ENCODE measurements at regions of chr15 and their contacts with region 1.

Region 1: GRCh38 chr15:71443538-71443937 is 328.3 kb downstream of the THSD4 start:
- DNase-seq: peak; percentile 51
- ATAC-seq: peak; percentile 53
- H3K4me3 ChIP-seq: no peak overlapping the region
- H3K27ac ChIP-seq: no peak overlapping the region
- H3K4me1 ChIP-seq: peaks cover 17% of the 10 kb centered on the region
- H3K27me3 ChIP-seq: no peaks in the 10 kb centered on the region
- CTCF ChIP-seq: peak; percentile 75
- POLR2A ChIP-seq: no peak
- RAD21 ChIP-seq: peak; percentile 60

Region 2: DNA sequence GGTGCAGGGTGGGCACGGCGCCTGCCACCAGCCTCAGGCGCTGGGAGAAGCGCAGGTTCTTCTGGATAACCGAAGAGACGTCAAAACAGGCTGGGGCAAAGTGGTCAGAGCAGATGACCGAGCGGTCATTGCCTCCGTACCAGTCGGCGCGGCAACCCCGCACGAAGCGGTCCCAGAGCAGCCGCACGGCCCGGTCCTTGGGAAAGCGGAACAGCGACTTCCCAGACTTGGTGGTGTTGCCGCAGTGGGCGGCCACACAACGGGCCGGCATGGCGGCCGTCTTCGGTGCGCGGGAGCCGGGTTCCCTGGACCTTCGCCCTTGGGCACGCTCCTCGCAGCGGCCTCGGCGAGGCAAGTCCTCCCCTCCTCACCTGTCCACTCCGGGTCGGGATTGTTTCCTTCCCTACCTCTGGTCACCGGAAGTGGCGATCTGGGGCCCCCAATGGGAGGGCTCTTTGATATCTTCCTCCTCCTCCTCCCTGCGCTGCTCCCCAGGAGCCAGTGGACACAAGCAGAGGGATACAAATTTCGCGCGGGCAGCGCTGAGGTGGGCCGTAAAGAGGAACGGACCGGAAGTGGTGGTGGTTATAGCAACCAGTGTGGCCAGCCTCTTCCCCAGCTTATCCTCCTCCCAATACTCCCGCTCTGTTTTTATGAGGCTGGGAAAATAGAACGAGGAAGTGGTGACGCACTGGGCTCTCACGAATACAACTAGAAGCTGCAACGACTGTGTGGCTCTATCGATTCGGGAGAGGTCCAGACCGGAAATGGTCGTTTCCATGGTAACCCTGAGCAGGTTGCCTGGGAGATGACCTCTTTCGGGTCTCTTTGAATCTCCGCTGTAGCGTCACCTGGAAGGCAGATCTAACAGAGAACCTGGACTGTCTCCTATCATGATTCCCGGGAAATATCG is 551.3 kb before region 1 on chr15 and contains the starts of genes LRRC49 and THAP10:
- CTCF ChIA-PET with region 1: no interaction called
- POLR2A ChIA-PET with region 1: no interaction called
- dilution Hi-C with region 1: no loop called
- in situ Hi-C with region 1: no loop called
- intact Hi-C with region 1: loop called (anchors 1 kb)
- DNase-seq: peak; percentile 98
- ATAC-seq: peak; percentile 95
- H3K4me3 ChIP-seq: peak within 1 kb of the TSS; percentile 66
- H3K27ac ChIP-seq: peak within 1 kb of the TSS; percentile 64
- H3K4me1 ChIP-seq: peaks cover 6% of the 10 kb centered on the region; the same call in 1 of the 2 replicates
- H3K27me3 ChIP-seq: no peaks in the 10 kb centered on the region
- CTCF ChIP-seq: no peak
- POLR2A ChIP-seq: peak; percentile 52; the same call in 1 of the 2 replicates
- RAD21 ChIP-seq: no peak; the same call in 1 of the 2 replicates
- total RNA-seq, gene LRRC49: 16.8 and 19.2 TPM in 2 replicates
- total RNA-seq, gene THAP10: 2.3 and 3.6 TPM in 2 replicates

Region 3: GRCh38 chr15:71011503-71012155 is 431.9 kb before region 1 on chr15:
- CTCF ChIA-PET with region 1: interaction called, 3 read pairs
- POLR2A ChIA-PET with region 1: no interaction called
- dilution Hi-C with region 1: no loop called
- in situ Hi-C with region 1: no loop called
- intact Hi-C with region 1: loop called (anchors 1 kb)
- DNase-seq: peak; percentile 84
- ATAC-seq: peak; percentile 100
- H3K4me3 ChIP-seq: no peak overlapping the region
- H3K27ac ChIP-seq: peak overlapping the region; percentile 42; the same call in 1 of the 2 replicates
- H3K4me1 ChIP-seq: no peaks in the 10 kb centered on the region
- H3K27me3 ChIP-seq: no peaks in the 10 kb centered on the region
- CTCF ChIP-seq: peak; percentile 94
- POLR2A ChIP-seq: 0 out of 2 replicates have a peak, but pooled peaks have one; percentile 25
- RAD21 ChIP-seq: peak; percentile 95

Region 4: GRCh38 chr15:71114896-71115554 is 328.5 kb before region 1 on chr15 and contains the start of gene THSD4:
- CTCF ChIA-PET with region 1: no interaction called
- POLR2A ChIA-PET with region 1: no interaction called
- dilution Hi-C with region 1: no loop called
- in situ Hi-C with region 1: loop called (anchors 5 kb)
- intact Hi-C with region 1: loop called (anchors 1 kb)
- DNase-seq: peak; percentile 72
- ATAC-seq: peak; percentile 85
- H3K4me3 ChIP-seq: peak within 1 kb of the TSS; percentile 96
- H3K27ac ChIP-seq: peak within 1 kb of the TSS; percentile 92
- H3K4me1 ChIP-seq: peaks cover 19% of the 10 kb centered on the region
- H3K27me3 ChIP-seq: no peaks in the 10 kb centered on the region
- CTCF ChIP-seq: peak; percentile 85
- POLR2A ChIP-seq: no peak
- RAD21 ChIP-seq: peak; percentile 76
- total RNA-seq, gene THSD4: 25.5 and 31.1 TPM in 2 replicates

Region 5: DNA sequence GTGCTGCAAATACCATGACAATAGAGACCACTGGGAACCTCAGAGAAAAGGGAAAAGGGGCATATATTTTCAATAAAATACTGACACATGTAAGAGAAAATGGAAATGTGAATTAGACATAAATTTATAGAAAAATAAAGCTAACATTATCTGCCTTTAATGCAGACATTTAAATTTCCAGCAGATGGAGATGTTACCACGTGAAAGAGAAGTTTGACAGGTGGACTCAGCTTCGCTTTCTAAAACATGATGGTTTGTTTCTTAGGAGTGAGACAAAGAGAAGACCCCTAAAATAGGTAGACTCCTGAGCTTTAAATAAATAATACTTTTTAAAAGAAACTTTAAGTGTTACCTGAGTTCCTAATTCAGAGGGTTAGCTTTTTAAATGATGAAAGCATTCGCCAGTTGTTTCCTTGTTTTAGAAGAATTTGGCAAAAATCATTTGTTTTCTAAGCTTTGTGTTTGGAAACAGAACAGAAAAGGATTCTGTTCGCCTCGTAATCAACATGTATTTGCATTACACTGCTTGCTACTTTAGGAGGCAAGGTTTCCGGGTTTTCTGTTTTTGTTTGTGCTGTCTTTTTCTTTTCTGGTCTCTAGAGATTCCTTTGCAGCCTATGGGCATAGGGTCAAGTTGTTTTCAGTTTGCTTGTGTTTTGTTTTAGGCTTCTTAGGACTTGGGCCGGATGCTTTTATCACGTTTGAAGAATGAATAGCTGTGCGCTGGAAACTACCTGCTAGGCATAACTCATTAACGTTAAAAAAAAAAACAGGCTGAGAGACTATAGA is 56.9 kb before region 1 on chr15:
- CTCF ChIA-PET with region 1: interaction called, 5 read pairs
- POLR2A ChIA-PET with region 1: no interaction called
- dilution Hi-C with region 1: no loop called
- in situ Hi-C with region 1: no loop called
- intact Hi-C with region 1: loop called (anchors 1 kb)
- DNase-seq: peak; percentile 38
- ATAC-seq: no peak
- H3K4me3 ChIP-seq: no peak overlapping the region
- H3K27ac ChIP-seq: no peak overlapping the region
- H3K4me1 ChIP-seq: peaks cover 16% of the 10 kb centered on the region
- H3K27me3 ChIP-seq: no peaks in the 10 kb centered on the region
- CTCF ChIP-seq: peak; percentile 48
- POLR2A ChIP-seq: no peak
- RAD21 ChIP-seq: peak; percentile 65

Region 6: GRCh38 chr15:71687902-71688508 is 244.5 kb after region 1 on chr15:
- CTCF ChIA-PET with region 1: no interaction called
- POLR2A ChIA-PET with region 1: no interaction called
- dilution Hi-C with region 1: no loop called
- in situ Hi-C with region 1: no loop called
- intact Hi-C with region 1: no loop called
- DNase-seq: peak; percentile 77
- ATAC-seq: no peak
- H3K4me3 ChIP-seq: no peak overlapping the region
- H3K27ac ChIP-seq: no peak overlapping the region
- H3K4me1 ChIP-seq: peaks cover 19% of the 10 kb centered on the region
- H3K27me3 ChIP-seq: no peaks in the 10 kb centered on the region
- CTCF ChIP-seq: no peak
- POLR2A ChIP-seq: no peak
- RAD21 ChIP-seq: no peak

Measured in IMR-90 (cell line).